CD4-positive, alpha-beta memory T cell (primary cell): ENCODE measurements at regions of chr17 and their contacts with region 1.

Region 1: DNA sequence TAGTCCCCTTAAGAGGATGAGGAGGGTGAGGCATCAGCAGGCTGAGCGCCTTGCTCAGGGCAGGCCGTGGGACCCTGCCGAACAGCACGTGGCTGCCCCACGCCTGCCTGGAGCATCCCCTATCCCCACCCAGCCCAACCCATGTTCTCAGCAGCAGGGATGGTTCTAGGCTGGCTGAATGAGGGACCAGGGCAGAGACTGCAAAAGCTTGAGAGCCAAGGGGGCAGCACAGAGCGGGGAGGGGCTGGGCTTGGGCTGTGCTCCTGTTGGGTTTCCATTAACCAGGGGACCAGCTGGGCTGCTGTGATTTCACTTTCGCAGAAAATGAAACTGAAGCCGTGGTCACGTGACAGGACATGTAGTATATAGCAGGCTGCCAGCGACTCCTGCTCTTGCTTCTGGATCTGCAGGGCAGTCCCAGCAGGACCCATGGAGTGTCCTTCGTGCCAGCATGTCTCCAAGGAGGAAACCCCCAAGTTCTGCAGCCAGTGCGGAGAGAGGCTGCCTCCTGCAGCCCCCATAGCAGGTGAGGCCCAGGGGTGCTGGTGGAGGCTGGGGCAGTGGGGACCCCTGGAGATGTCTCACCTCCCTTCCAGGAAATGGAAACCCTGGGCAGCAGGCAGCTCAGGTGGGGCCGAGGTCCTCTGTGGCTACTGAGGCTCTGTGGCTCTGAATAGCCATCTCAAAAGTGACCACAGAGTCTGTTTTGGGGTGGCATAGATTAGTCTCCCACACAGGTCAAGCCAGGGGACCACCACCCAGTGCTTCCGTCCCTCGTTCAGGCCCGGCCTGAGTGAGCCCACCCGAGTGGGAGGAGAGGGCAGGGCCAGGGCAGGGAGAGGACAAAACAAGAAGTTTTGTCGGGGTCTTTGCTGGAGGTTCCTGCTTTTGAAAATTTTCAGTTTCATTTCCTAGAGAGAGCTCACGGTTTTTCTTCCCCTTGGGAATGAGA is 2.9 kb downstream of the RNF213 start:
- DNase-seq: peak; percentile 81 to 96 (median 82)
- H3K4me3 ChIP-seq: peak overlapping the region; percentile 51 to 92
- H3K4me3 Mint-ChIP-seq: peak overlapping the region; percentile 90 to 99 (median 96)
- H3K27ac ChIP-seq: peak overlapping the region; percentile 67
- H3K27ac Mint-ChIP-seq: peak overlapping the region; percentile 93 to 98 (median 97)
- H3K4me1 ChIP-seq: peaks cover 72% of the 10 kb centered on the region
- H3K4me1 Mint-ChIP-seq: peaks cover 35 to 73% (median 36%) of the 10 kb centered on the region in 4 donors
- H3K27me3 ChIP-seq: no peaks in the 10 kb centered on the region
- H3K27me3 Mint-ChIP-seq: no peaks in the 10 kb centered on the region

Region 2: GRCh38 chr17:80147035-80147836 is 116.3 kb before region 1 on chr17 and contains the start of gene EIF4A3:
- CTCF ChIA-PET with region 1: no interaction called
- POLR2A ChIA-PET with region 1: interaction called, 4 read pairs
- intact Hi-C with region 1: loop called (anchors 2 kb)
- DNase-seq: peak; percentile 95 to 99 (median 97)
- H3K4me3 ChIP-seq: peak within 1 kb of the TSS; percentile 48 to 94
- H3K4me3 Mint-ChIP-seq: peak within 1 kb of the TSS; percentile 93 to 99 (median 98)
- H3K27ac ChIP-seq: peak within 1 kb of the TSS; percentile 83
- H3K27ac Mint-ChIP-seq: peak within 1 kb of the TSS; percentile 90 to 99 (median 98)
- H3K4me1 ChIP-seq: peaks cover 36% of the 10 kb centered on the region
- H3K4me1 Mint-ChIP-seq: peaks cover 23 to 54% (median 35%) of the 10 kb centered on the region in 4 donors
- H3K27me3 ChIP-seq: no peaks in the 10 kb centered on the region
- H3K27me3 Mint-ChIP-seq: no peaks in the 10 kb centered on the region
- total RNA-seq, gene EIF4A3: 54.2 to 56.0 TPM

Region 3: GRCh38 chr17:80195731-80196529 is 67.6 kb before region 1 on chr17:
- CTCF ChIA-PET with region 1: interaction called, 22 read pairs
- POLR2A ChIA-PET with region 1: interaction called, 19 read pairs
- intact Hi-C with region 1: no loop called
- DNase-seq: peak; percentile 44 to 62 (median 57)
- H3K4me3 ChIP-seq: no peak overlapping the region
- H3K4me3 Mint-ChIP-seq: no peak overlapping the region
- H3K27ac ChIP-seq: no peak overlapping the region
- H3K27ac Mint-ChIP-seq: peak overlapping the region in 4 of 7 donors; percentile 10 to 87 (median 58)
- H3K4me1 ChIP-seq: no peaks in the 10 kb centered on the region
- H3K4me1 Mint-ChIP-seq: peaks cover 0 to 4% (median 4%) of the 10 kb centered on the region in 4 donors
- H3K27me3 ChIP-seq: no peaks in the 10 kb centered on the region
- H3K27me3 Mint-ChIP-seq: peaks cover 0 to 1% of the 10 kb centered on the region in 2 donors

Region 4: DNA sequence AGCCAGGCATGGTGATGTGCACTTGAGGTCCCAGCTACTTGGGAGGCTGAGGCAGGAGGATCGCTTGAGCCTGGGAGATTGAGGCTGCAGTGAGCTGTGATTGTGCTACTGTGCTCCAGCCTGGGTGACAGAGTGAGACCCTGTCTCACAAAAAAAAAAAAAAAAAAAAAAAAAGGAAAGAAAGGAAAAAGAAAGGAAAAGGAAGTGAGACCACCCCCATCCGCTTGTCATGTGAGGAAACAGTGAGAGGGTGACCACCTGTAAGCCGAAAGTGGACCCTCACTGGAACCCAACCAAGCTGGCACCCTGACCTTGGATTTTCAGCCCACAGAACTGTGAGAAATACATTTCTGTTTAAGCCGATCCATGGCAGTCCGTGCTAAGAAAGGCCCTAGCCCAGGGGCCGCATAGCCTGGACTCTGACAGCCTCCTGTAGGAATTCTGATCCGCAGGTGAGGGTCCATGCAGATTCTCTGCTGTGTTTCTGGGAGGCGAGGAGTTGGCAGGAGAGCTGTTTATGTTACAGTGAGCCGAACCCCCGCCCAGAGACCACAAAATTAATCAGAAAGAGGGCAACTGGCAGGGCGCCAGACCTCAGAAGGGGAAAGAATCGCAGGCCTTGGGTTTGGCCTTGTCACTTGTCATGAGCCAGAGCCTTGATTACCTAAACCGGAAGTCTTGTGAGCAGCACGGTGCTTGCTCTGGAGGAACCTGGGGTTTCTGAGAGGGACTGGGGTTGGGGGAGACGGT is 44.3 kb before region 1 on chr17:
- CTCF ChIA-PET with region 1: no interaction called
- POLR2A ChIA-PET with region 1: interaction called, 71 read pairs
- intact Hi-C with region 1: loop called (anchors 1 kb)
- DNase-seq: peak; percentile 93 to 96 (median 93)
- H3K4me3 ChIP-seq: peak overlapping the region; percentile 96
- H3K4me3 Mint-ChIP-seq: peak overlapping the region; percentile 87 to 96 (median 94)
- H3K27ac ChIP-seq: peak overlapping the region; percentile 96
- H3K27ac Mint-ChIP-seq: peak overlapping the region; percentile 91 to 98 (median 97)
- H3K4me1 ChIP-seq: peaks cover 29% of the 10 kb centered on the region
- H3K4me1 Mint-ChIP-seq: peaks cover 23 to 61% (median 44%) of the 10 kb centered on the region in 4 donors
- H3K27me3 ChIP-seq: no peaks in the 10 kb centered on the region
- H3K27me3 Mint-ChIP-seq: no peaks in the 10 kb centered on the region

Region 5: DNA sequence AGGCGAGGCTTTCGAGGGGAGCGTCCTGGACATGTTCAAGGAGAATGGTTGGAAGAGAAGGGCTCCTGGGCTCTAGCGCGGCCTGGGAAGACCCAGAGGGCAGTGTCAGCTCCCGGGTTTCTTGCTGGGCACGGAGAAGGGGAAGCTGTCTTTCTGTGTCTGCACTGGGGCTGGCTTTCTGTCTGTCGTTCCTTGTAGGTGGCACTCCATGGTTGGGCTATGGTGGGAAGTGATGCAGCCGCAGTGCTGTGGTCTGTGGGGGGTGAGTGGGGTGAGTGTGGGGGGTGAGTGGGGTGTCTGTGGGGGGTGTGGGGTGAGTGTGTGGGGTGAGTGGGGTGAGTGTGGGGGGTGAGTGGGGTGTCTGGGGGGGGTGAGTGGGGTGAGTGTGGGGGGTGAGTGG is 10.8 kb after region 1 on chr17:
- CTCF ChIA-PET with region 1: no interaction called
- POLR2A ChIA-PET with region 1: interaction called, 16 read pairs
- intact Hi-C with region 1: no loop called
- DNase-seq: no peak
- H3K4me3 ChIP-seq: no peak overlapping the region
- H3K4me3 Mint-ChIP-seq: peak overlapping the region in 6 of 8 donors; percentile 39 to 69 (median 57)
- H3K27ac ChIP-seq: peak overlapping the region; percentile 20
- H3K27ac Mint-ChIP-seq: peak overlapping the region; percentile 54 to 91 (median 87)
- H3K4me1 ChIP-seq: peaks cover 52% of the 10 kb centered on the region
- H3K4me1 Mint-ChIP-seq: peaks cover 32 to 46% (median 35%) of the 10 kb centered on the region in 4 donors
- H3K27me3 ChIP-seq: no peaks in the 10 kb centered on the region
- H3K27me3 Mint-ChIP-seq: no peaks in the 10 kb centered on the region

Region 6: GRCh38 chr17:80292521-80292971 is 29.0 kb after region 1 on chr17:
- CTCF ChIA-PET with region 1: interaction called, 3 read pairs
- POLR2A ChIA-PET with region 1: interaction called, 30 read pairs
- intact Hi-C with region 1: no loop called
- DNase-seq: no peak
- H3K4me3 ChIP-seq: no peak overlapping the region
- H3K4me3 Mint-ChIP-seq: no peak overlapping the region
- H3K27ac ChIP-seq: no peak overlapping the region
- H3K27ac Mint-ChIP-seq: peak overlapping the region in 1 of 7 donors; percentile 42
- H3K4me1 ChIP-seq: no peaks in the 10 kb centered on the region
- H3K4me1 Mint-ChIP-seq: peaks cover 0 to 8% (median 3%) of the 10 kb centered on the region in 4 donors
- H3K27me3 ChIP-seq: no peaks in the 10 kb centered on the region
- H3K27me3 Mint-ChIP-seq: no peaks in the 10 kb centered on the region